Cardiac septum (tissue), 1 donor: ENCODE measurements at regions of chr1 and their contacts with region 1.

Region 1: DNA sequence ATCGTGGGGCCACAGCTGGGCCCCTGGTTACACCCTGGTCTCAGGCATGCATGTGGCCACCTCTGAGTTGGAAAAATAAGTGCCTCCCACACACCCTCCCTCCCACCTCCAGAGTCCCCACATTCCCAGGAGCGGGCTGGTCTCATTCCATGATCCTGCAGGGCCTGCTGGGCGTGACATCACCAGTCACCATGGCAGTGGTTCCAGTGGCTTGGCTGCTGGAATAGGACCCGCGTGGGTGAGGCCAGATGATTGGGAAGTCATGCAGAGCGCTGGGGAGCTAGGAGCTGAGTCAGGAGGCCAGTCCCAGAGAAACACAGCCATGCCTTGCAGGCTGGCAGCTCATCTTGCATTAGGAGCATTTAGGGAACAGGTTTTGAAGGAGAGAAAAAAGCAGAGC is 125.4 kb upstream of the TMEM51 start:
- DNase-seq: peak; percentile 81

Region 2: DNA sequence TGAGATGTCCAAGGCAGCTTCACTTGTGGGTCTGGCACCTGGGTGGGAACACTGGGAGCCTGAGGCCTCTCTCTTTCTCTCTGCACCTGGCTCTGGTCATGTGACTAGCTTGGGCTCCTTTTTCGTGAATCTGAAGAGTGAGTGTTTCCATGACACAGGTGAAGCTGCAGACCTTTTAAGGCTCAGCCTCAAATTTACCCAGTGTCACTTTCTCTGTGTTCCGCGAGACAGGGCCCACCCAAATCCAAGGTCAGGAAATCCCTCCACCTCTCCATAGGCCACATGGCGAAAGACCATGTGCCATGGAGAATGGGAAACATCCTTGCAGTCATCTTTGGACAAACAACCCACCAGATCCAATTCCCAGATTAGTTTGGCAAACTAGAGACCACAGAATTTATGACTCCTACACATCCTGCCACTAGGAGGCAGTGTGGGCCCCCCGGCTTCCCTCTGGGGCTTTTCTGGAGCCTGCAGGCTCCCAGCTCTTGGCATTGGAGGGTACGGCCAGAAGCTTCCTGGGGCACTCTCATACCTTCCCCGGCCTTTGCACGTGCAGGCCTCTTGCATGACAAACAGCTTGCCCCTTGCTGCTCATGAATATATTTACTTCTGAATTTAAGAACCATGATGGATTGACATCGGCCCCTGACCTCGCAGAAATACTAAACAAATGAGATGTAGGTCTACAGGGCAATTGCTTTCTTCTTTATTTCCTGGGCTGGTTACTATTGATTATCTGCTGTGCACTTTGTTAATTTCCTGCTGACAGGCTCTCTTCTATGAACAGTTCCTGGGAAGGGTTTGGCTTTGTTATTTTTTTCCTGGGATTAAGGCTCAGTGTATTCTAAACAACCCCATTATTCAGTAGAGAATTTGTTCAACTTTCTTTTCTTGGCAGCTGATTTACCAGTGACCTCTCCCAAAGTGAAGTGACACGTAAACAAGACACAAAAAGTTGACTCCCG is 248.9 kb before region 1 on chr1:
- intact Hi-C with region 1: loop called (anchors 2 kb)
- DNase-seq: no peak

Region 3: DNA sequence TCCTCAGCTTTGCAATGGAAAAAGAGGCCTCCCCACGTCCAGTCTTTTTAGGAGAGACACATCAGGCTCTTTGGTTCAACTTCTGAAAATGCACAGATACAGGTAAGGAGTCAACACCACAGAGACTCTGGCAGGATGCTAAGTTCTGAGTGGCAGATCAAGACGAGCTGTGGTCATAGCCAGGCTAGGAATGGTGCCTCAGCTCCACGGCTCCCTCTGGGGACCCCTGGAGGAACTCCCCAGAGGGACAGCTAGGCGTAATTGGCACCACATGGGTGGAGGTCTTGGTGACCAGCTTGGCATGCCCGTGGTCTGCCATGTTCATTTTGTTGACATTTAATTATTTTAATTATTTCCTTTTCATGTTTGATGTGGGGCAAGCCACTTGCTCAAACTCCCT is 223.5 kb before region 1 on chr1:
- intact Hi-C with region 1: no loop called
- DNase-seq: no peak

Region 4: DNA sequence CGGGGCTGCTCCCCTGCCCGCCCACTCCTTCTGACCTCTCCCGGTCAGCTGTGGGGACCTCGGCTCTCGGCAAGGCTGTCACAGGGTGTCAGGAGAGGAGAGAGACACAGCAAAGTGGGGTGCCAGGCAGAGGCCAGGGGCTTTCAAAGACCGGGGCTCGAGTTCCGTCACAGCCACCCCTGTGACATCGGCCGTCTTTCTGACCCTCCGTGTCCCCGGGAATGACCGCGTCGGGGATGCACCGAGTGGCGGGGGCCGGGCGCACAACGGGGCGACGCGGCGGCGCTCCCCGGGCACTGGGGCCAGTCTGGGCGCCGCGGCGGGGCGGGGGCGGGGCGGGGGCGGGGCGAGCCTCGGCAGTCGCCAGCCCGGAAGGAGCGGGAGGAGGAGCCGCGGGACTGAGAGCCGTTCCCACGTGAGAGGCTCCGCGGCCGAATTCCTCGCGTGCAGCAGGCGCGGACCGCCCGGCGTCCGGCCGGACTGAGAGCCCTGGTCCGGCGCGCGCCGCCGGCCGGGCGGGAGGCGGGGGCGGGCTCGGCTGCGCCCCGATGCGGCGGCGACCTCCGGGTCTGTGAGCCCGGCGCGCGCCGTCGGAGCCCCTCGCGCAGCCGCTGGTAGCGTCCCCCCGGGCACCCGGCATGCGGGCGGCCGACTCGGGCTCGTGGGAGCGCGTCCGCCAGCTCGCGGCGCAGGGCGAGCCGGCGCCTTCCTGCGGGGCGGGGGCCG is 104.2 kb before region 1 on chr1:
- intact Hi-C with region 1: loop called (anchors 1 kb)
- DNase-seq: peak; percentile 82